Activated naive CD4-positive, alpha-beta T cell treated with anti-CD3 and anti-CD28 coated beads for 36 hours (primary cell): ENCODE measurements at regions of chr7 and their contacts with region 1.

Region 1: DNA sequence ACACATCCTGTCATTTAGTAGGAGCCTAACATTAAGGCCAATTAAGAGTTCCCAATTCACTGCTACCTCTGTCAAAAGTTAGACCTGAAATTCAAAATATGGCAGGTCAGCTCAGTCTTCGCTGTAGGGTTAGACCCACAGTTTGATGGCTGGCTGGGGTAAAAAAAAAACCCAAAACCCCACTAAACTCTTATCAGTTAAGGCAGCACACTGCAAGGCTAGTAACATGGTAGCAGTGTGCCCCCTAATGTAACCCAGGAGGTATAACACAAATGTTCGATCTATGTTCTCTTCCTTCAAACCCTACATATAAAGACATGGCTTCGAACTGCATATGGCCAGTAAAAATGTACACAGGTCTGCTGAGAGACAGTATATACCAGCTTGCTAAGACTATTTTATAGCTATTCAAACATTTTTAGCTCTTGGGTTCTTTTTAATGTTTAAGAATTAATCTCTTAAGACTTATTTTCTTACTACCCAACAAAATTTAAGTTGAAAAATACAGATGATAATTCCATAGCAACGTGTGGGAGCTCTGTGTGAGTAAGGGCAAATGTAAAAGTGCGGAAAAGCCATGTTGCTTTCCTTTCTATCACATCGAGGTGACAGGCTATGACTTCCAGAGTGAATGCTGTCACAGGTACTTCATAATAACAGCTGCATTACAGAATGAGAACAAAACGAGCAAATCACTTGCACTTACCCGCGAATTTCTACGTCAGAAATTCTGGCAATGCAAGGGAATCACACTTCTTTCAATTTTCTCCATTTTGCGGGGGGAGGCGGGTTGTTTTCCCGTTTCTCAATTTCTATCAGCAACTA is 168.4 kb upstream of the IMMP2L start:
- DNase-seq: peak; percentile 12
- H3K4me3 Mint-ChIP-seq: no peak overlapping the region
- H3K27ac Mint-ChIP-seq: no peak overlapping the region
- H3K4me1 Mint-ChIP-seq: no peaks in the 10 kb centered on the region
- H3K27me3 Mint-ChIP-seq: peaks cover 4% of the 10 kb centered on the region

Region 2: GRCh38 chr7:110090110-110090769 is 1640.4 kb before region 1 on chr7:
- CTCF ChIA-PET with region 1: no interaction called
- intact Hi-C with region 1: loop called (anchors 2 kb)
- DNase-seq: no peak
- H3K4me3 Mint-ChIP-seq: no peak overlapping the region
- H3K27ac Mint-ChIP-seq: no peak overlapping the region
- H3K4me1 Mint-ChIP-seq: no peaks in the 10 kb centered on the region
- H3K27me3 Mint-ChIP-seq: peaks cover 2% of the 10 kb centered on the region

Region 3: GRCh38 chr7:111059833-111060232 is 670.9 kb before region 1 on chr7:
- CTCF ChIA-PET with region 1: no interaction called
- intact Hi-C with region 1: no loop called
- DNase-seq: no peak
- H3K4me3 Mint-ChIP-seq: no peak overlapping the region
- H3K27ac Mint-ChIP-seq: no peak overlapping the region
- H3K4me1 Mint-ChIP-seq: peaks cover 12% of the 10 kb centered on the region
- H3K27me3 Mint-ChIP-seq: no peaks in the 10 kb centered on the region

Region 4: DNA sequence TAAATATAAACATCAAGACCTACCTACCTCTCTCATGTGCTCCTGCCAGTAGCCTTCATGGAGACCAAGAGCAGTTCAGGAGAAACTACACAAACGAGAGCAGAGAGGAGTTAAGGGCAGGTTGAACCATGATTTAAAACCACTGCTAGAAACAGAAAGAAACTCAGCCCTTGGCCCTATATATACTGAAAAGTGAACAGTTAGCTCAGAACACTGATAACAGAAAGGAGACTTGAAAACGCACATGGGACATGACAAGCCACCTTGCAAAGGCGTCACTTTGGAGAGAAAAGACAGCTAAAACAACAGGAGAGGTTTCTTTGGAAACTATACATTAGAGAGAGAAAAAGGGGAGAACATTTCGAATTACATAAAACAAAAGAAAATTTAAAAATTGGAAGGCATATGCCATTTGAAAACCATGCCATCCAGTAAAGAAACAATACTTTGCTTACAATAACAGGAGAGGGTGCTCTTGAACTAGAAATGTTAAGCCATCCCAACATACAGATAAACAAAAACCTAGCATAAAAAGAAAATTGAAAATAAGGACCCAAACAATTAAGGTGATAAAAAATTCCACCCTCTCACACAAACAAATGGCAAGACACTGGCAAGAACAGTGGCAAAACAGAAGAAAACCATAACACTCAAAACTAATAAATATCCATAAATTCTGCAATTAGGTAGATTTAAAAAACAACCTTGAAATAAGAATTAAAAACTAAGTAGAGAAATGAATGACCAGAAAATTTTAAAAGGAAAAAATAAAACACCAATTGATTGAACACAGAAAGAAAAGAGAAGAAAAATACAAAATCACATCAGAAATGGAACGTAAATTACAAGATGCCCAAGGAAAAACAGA is 401.1 kb before region 1 on chr7:
- CTCF ChIA-PET with region 1: no interaction called
- intact Hi-C with region 1: loop called (anchors 2 kb)
- DNase-seq: no peak
- H3K4me3 Mint-ChIP-seq: no peak overlapping the region
- H3K27ac Mint-ChIP-seq: no peak overlapping the region
- H3K4me1 Mint-ChIP-seq: peaks cover 8% of the 10 kb centered on the region
- H3K27me3 Mint-ChIP-seq: no peaks in the 10 kb centered on the region